ENCODE measurements at regions of chr19 and their contacts with region 1.

Region 1: GRCh38 chr19:45152504-45153338 is 8.1 kb downstream of the NKPD1 start:
- DNase-seq: peak; percentile 12 to 63 (median 49)
- H3K4me3 ChIP-seq: peak overlapping the region; percentile 45
- H3K4me3 Mint-ChIP-seq: peak overlapping the region; percentile 78 to 90 (median 83)
- H3K27ac ChIP-seq: no peak overlapping the region
- H3K27ac Mint-ChIP-seq: peak overlapping the region in 4 of 8 donors; percentile 26 to 70 (median 49)
- H3K4me1 ChIP-seq: peaks cover 19% of the 10 kb centered on the region
- H3K4me1 Mint-ChIP-seq: peaks cover 20 to 35% (median 22%) of the 10 kb centered on the region in 3 donors
- H3K27me3 ChIP-seq: peaks cover 6% of the 10 kb centered on the region
- H3K27me3 Mint-ChIP-seq: peaks cover 10 to 16% of the 10 kb centered on the region in 2 donors

Region 2: GRCh38 chr19:45166723-45167252 is 14.1 kb after region 1 on chr19:
- CTCF ChIA-PET with region 1: interaction called, 10 read pairs
- POLR2A ChIA-PET with region 1: interaction called, 5 read pairs
- DNase-seq: no peak
- H3K4me3 ChIP-seq: no peak overlapping the region
- H3K4me3 Mint-ChIP-seq: no peak overlapping the region
- H3K27ac ChIP-seq: no peak overlapping the region
- H3K27ac Mint-ChIP-seq: peak overlapping the region in 3 of 8 donors; percentile 14 to 79 (median 52)
- H3K4me1 ChIP-seq: peaks cover 52% of the 10 kb centered on the region
- H3K4me1 Mint-ChIP-seq: peaks cover 31 to 54% (median 34%) of the 10 kb centered on the region in 3 donors
- H3K27me3 ChIP-seq: no peaks in the 10 kb centered on the region
- H3K27me3 Mint-ChIP-seq: no peaks in the 10 kb centered on the region

Region 3: DNA sequence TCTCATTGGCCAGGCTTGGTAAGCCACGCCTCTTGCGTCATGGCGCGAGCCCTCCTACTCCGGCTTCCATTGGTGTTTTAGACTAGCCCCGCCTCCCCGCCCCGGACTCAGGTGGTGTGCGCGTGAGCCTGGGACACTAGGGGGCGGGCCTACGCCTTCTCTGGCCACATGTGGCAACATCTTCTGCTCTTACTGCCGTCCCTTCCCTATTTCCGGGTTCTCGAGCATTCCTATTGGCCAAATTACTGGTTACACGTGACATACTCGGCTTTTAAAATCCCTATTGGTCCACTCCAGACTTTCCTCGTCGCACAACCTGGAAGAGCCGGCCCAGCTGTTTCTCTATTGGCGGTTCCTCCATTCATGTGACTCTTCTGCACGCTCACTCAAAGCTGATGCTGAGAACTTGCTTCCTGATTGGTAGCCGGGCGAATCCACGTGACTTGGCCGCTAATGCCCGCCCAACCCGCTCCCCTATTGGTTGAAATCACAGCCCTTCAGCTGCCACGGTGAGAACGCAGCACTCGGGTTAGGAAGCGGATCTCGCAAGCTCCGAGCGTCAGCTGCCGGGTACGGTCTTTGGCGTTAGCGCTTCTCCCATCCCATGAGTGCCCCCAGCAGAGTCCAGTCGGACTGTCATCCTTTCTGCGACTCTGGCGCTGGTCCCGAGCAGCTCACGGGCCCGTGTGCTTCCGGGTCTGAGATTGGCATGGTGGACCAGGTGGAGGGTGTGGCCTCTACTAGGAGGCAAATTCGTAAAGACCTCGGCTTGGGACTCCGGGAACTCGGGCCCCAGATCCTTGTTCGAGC is 25.7 kb after region 1 on chr19 and contains the start of gene BLOC1S3:
- CTCF ChIA-PET with region 1: interaction called, 6 read pairs
- POLR2A ChIA-PET with region 1: interaction called, 19 read pairs
- DNase-seq: peak; percentile 100
- H3K4me3 ChIP-seq: peak within 1 kb of the TSS; percentile 99
- H3K4me3 Mint-ChIP-seq: peak within 1 kb of the TSS; percentile 82 to 95 (median 91)
- H3K27ac ChIP-seq: peak within 1 kb of the TSS; percentile 94
- H3K27ac Mint-ChIP-seq: peak within 1 kb of the TSS; percentile 77 to 98 (median 95)
- H3K4me1 ChIP-seq: peaks cover 36% of the 10 kb centered on the region
- H3K4me1 Mint-ChIP-seq: peaks cover 35 to 52% (median 43%) of the 10 kb centered on the region in 3 donors
- H3K27me3 ChIP-seq: no peaks in the 10 kb centered on the region
- H3K27me3 Mint-ChIP-seq: no peaks in the 10 kb centered on the region
- total RNA-seq, gene BLOC1S3: 12.4 TPM

Region 4: GRCh38 chr19:45340899-45341453 is 188.3 kb after region 1 on chr19:
- CTCF ChIA-PET with region 1: no interaction called
- POLR2A ChIA-PET with region 1: no interaction called
- DNase-seq: no peak
- H3K4me3 ChIP-seq: no peak overlapping the region
- H3K4me3 Mint-ChIP-seq: no peak overlapping the region
- H3K27ac ChIP-seq: no peak overlapping the region
- H3K27ac Mint-ChIP-seq: no peak overlapping the region
- H3K4me1 ChIP-seq: peaks cover 9% of the 10 kb centered on the region
- H3K4me1 Mint-ChIP-seq: peaks cover 7 to 9% (median 9%) of the 10 kb centered on the region in 3 donors
- H3K27me3 ChIP-seq: peaks cover 13% of the 10 kb centered on the region
- H3K27me3 Mint-ChIP-seq: peaks cover 21 to 45% of the 10 kb centered on the region in 2 donors